Endothelial cell of umbilical vein (primary cell): ENCODE measurements at regions of chr17 and their contacts with region 1.

Region 1: DNA sequence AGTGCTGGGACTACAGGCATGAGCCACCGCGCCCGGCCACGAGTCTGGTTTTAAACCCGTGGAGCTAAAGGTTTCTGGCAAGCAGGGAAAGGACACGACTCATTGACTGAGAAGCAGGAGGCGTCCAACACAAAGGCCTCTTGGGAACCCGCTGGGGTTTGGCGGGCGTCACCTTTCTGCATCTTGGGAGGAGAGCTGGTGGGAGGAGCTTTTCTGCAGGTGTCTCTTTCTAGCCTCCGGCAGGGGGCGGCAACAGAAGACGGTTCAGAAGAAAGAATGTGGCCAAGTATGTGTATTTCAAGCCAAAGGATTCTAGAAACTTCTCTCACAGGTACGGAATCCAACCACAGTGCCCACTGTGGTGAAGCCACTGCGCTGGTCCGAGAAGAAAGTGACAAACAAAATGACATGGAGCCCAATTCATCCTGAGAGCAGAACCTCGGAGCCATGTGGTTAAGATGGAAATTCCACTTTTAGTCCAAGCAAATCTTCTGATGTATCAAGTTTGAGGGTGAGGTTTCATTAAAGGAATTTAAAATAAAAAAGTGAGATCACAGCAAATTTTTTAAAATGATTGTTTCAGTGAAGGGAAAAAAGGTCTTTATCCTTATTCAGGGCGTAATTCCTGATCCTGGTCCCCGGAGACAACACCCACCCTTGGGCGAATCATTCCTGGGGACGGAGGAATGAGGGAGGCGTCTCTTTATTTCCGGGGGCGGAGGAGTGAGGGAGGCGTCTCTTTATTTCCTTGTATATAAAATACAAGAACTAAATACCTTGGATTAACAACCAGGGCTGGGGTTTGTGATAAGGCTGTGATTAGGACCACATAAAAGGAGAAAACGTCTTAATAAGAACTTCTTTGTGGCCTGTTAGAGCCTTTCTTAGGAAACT is 97.6 kb downstream of the MRM3 start:
- DNase-seq: peak; percentile 85
- H3K4me3 ChIP-seq: peak overlapping the region in 1 of 3 experiments; percentile 56
- H3K27ac ChIP-seq: peak overlapping the region; percentile 95
- H3K4me1 ChIP-seq: peaks cover 23% of the 10 kb centered on the region
- H3K27me3 ChIP-seq: no peaks in the 10 kb centered on the region
- CTCF ChIP-seq: peak; percentile 68 to 75
- POLR2A ChIP-seq: no peak

Region 2: GRCh38 chr17:794876-795275 is 84.9 kb before region 1 on chr17:
- CTCF ChIA-PET with region 1: interaction called, 40 read pairs
- POLR2A ChIA-PET with region 1: no interaction called
- dilution Hi-C with region 1: no loop called
- intact Hi-C with region 1: loop called (anchors 1 kb)
- DNase-seq: peak; percentile 85
- H3K4me3 ChIP-seq: peak overlapping the region in 2 of 3 experiments; percentile 12 to 24
- H3K27ac ChIP-seq: no peak overlapping the region
- H3K4me1 ChIP-seq: peaks cover 10% of the 10 kb centered on the region
- H3K27me3 ChIP-seq: no peaks in the 10 kb centered on the region
- CTCF ChIP-seq: peak; percentile 79 to 94
- POLR2A ChIP-seq: no peak

Region 3: GRCh38 chr17:823501-823902 is 56.3 kb before region 1 on chr17:
- CTCF ChIA-PET with region 1: no interaction called
- POLR2A ChIA-PET with region 1: no interaction called
- dilution Hi-C with region 1: no loop called
- intact Hi-C with region 1: no loop called
- DNase-seq: no peak
- H3K4me3 ChIP-seq: no peak overlapping the region
- H3K27ac ChIP-seq: no peak overlapping the region
- H3K4me1 ChIP-seq: no peaks in the 10 kb centered on the region
- H3K27me3 ChIP-seq: no peaks in the 10 kb centered on the region
- CTCF ChIP-seq: no peak
- POLR2A ChIP-seq: no peak

Region 4: DNA sequence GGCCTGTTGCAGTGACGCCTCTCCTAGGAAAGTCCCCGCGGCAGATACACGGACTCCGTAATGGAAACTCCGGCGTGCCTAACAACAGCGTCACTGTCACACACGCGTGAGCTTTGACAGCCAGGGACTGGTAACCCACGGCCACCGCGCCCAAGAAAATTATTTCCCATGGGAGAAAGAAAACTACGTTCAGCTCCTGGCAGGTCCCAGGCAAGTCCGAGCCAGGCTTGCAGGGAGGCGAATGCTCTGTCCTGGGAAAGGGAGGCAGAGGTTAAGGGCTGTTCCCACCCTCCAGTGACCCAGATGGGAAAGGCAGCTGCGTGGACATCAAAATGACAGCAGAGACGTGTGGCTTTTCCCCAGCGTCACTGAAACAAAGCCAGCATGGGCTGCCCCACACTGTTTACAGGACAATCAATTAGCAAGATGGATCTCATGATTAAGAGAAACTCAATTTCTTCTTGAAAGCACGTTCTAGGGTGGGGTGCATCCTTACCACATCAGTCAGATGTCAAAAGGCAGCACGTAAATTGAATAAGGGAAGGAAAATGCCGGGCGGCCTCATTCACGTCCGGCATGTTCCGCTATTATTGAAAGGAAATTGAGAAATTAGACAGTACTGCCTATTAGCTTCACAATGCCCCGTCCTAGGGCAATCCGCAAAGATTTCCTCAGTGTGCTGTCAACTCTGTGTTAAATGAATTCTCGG is 17.3 kb after region 1 on chr17:
- CTCF ChIA-PET with region 1: interaction called, 21 read pairs
- POLR2A ChIA-PET with region 1: no interaction called
- dilution Hi-C with region 1: no loop called
- intact Hi-C with region 1: no loop called
- DNase-seq: peak; percentile 41
- H3K4me3 ChIP-seq: no peak overlapping the region
- H3K27ac ChIP-seq: no peak overlapping the region
- H3K4me1 ChIP-seq: peaks cover 9% of the 10 kb centered on the region
- H3K27me3 ChIP-seq: no peaks in the 10 kb centered on the region
- CTCF ChIP-seq: no peak
- POLR2A ChIP-seq: no peak

Region 5: DNA sequence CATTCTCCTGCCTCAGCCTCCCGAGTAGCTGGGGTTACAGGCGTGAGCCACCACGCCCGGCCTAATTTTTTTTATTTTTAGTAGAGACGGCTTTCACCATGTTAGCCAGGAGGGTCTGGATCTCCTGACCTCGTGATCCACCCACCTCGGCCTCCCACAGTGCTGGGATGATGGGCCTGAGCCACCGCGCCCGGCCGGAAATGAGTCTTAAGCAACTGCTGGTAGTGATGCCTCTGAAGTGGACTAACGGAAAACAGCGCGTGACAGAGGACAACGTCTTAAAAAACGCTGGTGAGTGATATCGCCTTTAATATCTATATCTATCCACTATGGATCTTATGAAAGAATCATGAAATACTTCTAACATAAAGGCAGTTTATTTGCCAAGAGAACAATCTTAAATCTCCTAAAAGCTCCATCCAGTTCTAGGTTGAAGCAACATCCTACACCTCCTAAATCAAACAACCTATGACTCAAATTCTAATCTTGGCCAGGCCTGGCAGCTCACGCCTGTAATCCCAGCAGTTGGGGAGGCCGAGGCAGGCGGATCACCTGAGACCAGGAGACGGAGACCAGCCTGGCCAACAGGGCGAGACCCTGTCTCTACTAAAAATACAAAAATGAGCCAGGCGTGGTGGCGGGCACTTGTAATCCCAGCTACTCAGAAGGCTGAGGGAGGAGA is 30.0 kb after region 1 on chr17:
- CTCF ChIA-PET with region 1: interaction called, 11 read pairs
- POLR2A ChIA-PET with region 1: no interaction called
- dilution Hi-C with region 1: no loop called
- intact Hi-C with region 1: no loop called
- DNase-seq: no peak
- H3K4me3 ChIP-seq: no peak overlapping the region
- H3K27ac ChIP-seq: no peak overlapping the region
- H3K4me1 ChIP-seq: peaks cover 11% of the 10 kb centered on the region
- H3K27me3 ChIP-seq: no peaks in the 10 kb centered on the region
- CTCF ChIP-seq: no peak
- POLR2A ChIP-seq: no peak

Region 6: DNA sequence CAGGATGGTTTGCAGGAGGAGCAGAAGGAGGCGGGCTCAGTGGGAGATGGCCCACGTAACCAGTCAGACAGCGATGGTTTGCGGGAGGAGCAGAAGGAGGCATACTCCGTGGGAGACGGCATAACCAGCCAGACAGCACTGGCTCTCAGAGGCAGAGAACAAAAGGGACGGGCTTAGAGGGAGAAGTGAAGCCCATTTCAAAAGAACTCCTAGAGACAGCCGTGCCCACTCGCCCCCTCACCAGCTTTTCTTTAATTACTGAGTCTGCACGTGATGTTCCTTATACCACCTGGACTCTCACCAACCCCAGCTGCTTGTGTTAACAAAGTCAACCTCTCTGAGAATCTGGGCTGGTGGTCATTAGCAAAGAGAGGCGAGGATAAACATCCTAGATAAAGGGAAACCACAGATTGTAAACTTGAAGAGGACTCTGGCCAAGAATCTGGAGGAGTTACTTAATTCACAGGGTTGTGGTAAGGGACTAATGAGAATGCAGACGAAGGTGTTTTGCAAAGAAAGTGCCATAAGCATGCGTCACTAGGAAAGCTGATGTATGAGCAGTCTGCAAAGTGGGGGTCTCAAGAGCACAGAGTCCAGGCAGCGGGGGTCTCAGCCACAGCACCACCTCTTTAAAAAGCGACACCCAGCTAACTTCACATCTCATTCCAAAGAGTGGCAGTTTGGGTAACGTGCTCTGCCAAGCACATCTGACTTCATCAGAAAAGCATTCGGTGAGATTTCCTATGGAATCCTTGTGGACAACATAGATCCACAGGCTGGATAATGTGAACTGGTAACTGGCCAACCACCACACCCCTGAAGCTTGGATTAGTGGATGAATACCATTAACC is 48.0 kb after region 1 on chr17:
- CTCF ChIA-PET with region 1: interaction called, 27 read pairs
- POLR2A ChIA-PET with region 1: no interaction called
- dilution Hi-C with region 1: no loop called
- intact Hi-C with region 1: loop called (anchors 1 kb)
- DNase-seq: peak; percentile 70
- H3K4me3 ChIP-seq: no peak overlapping the region
- H3K27ac ChIP-seq: peak overlapping the region; percentile 45
- H3K4me1 ChIP-seq: peaks cover 14% of the 10 kb centered on the region
- H3K27me3 ChIP-seq: no peaks in the 10 kb centered on the region
- CTCF ChIP-seq: no peak
- POLR2A ChIP-seq: no peak

Region 7: GRCh38 chr17:951325-952132 is 71.7 kb after region 1 on chr17:
- CTCF ChIA-PET with region 1: interaction called, 10 read pairs
- POLR2A ChIA-PET with region 1: no interaction called
- dilution Hi-C with region 1: no loop called
- intact Hi-C with region 1: no loop called
- DNase-seq: no peak
- H3K4me3 ChIP-seq: no peak overlapping the region
- H3K27ac ChIP-seq: no peak overlapping the region
- H3K4me1 ChIP-seq: peaks cover 5% of the 10 kb centered on the region
- H3K27me3 ChIP-seq: no peaks in the 10 kb centered on the region
- CTCF ChIP-seq: no peak
- POLR2A ChIP-seq: no peak

Region 8: DNA sequence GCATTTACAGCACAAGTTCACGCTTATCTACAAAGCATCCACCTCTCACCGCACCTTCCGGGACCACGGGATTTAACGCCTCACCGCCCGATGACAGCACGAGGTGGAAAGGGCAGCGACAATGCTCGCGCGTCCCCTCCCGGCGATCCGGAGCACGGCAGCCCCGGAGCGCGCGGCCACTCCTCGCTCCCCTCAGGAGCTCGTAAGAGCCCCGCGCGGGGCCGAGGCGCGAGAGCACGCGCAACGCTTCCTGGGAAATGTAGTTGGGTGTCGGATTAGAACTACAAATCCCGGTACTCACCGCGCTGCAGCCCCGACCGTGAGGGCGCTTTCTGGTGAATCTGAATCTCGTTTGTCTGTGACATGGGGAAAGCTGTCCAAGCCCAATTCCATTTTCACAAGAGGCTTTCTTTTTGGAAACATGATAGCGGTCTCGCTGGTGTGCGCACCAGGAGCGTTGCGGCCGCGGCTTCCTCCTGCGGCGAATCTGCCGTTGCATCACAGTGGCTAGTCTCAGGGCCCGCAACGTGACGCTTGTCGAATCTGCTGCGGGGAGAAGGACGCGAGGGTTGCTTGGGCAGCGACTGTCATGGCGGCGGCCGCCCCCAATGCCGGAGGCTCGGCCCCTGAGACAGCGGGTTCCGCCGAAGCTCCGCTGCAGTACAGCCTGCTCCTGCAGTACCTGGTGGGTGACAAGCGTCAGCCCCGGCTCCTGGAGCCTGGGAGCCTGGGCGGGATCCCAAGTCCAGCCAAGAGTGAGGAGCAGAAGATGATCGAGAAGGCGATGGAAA is 117.0 kb after region 1 on chr17 and contains the start of gene TIMM22:
- CTCF ChIA-PET with region 1: interaction called, 20 read pairs
- POLR2A ChIA-PET with region 1: no interaction called
- dilution Hi-C with region 1: no loop called
- intact Hi-C with region 1: no loop called
- DNase-seq: peak; percentile 98
- H3K4me3 ChIP-seq: peak within 1 kb of the TSS; percentile 77 to 97 (median 86)
- H3K27ac ChIP-seq: peak within 1 kb of the TSS; percentile 86
- H3K4me1 ChIP-seq: peaks cover 29% of the 10 kb centered on the region
- H3K27me3 ChIP-seq: no peaks in the 10 kb centered on the region
- CTCF ChIP-seq: peak; percentile 94 to 97
- POLR2A ChIP-seq: peak; percentile 81
- total RNA-seq, gene TIMM22: 19.5 and 19.6 TPM in 2 replicates